Posterior cingulate gyrus (tissue), 11 donors: ENCODE measurements at regions of chr9 and their contacts with region 1.

Region 1: DNA sequence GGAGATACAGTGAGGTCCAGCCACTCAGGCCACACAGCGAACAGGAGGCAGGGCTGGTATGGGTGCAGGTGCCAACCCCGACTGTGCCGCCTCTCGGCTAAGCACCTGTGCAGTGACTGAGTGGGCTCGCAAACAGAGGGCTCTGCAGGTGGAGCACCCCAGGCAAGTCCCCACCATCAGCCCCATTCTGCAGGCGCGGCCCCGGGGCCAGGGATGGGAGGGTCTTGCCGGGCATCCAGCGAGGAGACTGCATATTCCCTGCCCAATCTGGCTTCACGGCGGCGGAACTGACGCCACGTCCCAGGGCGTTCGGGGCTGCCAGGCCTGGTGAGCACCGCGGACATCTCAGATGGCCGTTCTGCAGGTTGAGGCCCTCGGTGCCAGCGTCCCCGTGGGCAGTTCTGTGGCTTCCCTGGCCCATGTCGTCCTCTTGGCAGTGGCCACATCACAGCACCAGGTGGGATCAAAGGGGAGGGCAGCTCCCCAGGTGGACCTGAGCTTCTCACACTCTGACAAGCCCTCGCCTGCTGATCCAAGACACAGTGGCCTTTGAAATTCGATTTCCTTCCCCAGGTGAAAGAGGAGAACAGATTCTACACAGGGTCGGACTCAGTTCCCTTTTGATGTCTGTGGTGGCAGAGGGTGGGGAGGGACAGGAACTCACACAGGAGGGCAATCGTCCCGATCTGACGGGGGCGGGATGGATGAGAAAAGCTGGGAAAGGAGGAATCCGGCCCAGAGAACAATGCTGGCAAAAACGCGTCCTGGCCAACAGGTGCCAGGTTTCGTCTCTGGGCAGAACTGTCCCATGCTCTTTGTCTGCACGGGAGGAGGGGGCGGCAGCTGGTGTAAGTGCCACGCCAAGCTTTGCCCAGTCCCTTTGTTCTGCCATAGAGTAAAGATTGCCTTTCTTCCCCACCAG is 18.8 kb downstream of the DBH start:
- DNase-seq: no peak

Region 2: GRCh38 chr9:133686642-133687575 is 31.9 kb after region 1 on chr9:
- intact Hi-C with region 1: loop called (anchors 5 kb)
- DNase-seq: peak in 9 of 10 donors; percentile 32 to 95 (median 68)